B cell (primary cell): ENCODE measurements at regions of chr6 and their contacts with region 1.

Region 1: GRCh38 chr6:156686995-156687788 is 90.0 kb upstream of the ARID1B start:
- DNase-seq: peak; percentile 91
- ATAC-seq: peak; percentile 83
- H3K4me3 ChIP-seq: peak overlapping the region; percentile 80 to 99 (median 84)
- H3K4me3 Mint-ChIP-seq: peak overlapping the region; percentile 88
- H3K27ac ChIP-seq: peak overlapping the region; percentile 92 to 94
- H3K27ac Mint-ChIP-seq: peak overlapping the region; percentile 98
- H3K4me1 ChIP-seq: peaks cover 50% of the 10 kb centered on the region in 2 donors
- H3K4me1 Mint-ChIP-seq: peaks cover 59% of the 10 kb centered on the region
- H3K27me3 ChIP-seq: no peaks in the 10 kb centered on the region
- H3K27me3 Mint-ChIP-seq: no peaks in the 10 kb centered on the region
- CTCF ChIP-seq: no peak

Region 2: GRCh38 chr6:156028335-156029131 is 658.7 kb before region 1 on chr6:
- CTCF ChIA-PET with region 1: no interaction called
- POLR2A ChIA-PET with region 1: interaction called, 11 read pairs
- intact Hi-C with region 1: no loop called
- DNase-seq: peak; percentile 23
- ATAC-seq: peak; percentile 82
- H3K4me3 ChIP-seq: no peak overlapping the region
- H3K4me3 Mint-ChIP-seq: peak overlapping the region; percentile 50
- H3K27ac ChIP-seq: no peak overlapping the region
- H3K27ac Mint-ChIP-seq: peak overlapping the region; percentile 86
- H3K4me1 ChIP-seq: peaks cover 32 to 40% of the 10 kb centered on the region in 2 donors
- H3K4me1 Mint-ChIP-seq: peaks cover 46% of the 10 kb centered on the region
- H3K27me3 ChIP-seq: no peaks in the 10 kb centered on the region
- H3K27me3 Mint-ChIP-seq: no peaks in the 10 kb centered on the region
- CTCF ChIP-seq: no peak

Region 3: DNA sequence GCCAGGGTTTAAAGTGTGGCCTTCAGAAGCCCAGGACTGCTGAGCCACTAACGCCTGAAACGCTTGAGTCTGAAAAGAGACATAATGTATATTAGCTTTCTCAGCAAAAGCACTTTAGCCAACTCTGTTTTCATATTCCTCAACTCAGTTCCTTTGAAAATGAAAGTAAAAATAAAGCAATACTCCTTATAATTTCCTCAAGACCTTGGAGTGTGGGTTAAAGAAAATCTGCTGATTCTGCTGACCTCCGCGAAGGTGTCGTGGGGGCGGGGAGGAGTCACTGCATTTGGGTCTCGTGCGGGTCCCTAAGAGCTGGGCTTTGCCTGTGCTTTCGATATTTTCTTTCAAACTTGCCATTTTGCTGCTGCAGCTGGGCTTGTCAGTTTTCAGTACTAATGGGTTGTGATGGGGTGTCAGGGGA is 52.2 kb before region 1 on chr6:
- CTCF ChIA-PET with region 1: interaction called, 14 read pairs
- POLR2A ChIA-PET with region 1: no interaction called
- intact Hi-C with region 1: loop called (anchors 2 kb)
- DNase-seq: peak; percentile 17
- ATAC-seq: no peak
- H3K4me3 ChIP-seq: peak overlapping the region in 3 of 5 experiments; percentile 10 to 37 (median 35)
- H3K4me3 Mint-ChIP-seq: peak overlapping the region; percentile 84
- H3K27ac ChIP-seq: peak overlapping the region; percentile 77 to 85
- H3K27ac Mint-ChIP-seq: peak overlapping the region; percentile 94
- H3K4me1 ChIP-seq: peaks cover 44 to 48% of the 10 kb centered on the region in 2 donors
- H3K4me1 Mint-ChIP-seq: peaks cover 51% of the 10 kb centered on the region
- H3K27me3 ChIP-seq: no peaks in the 10 kb centered on the region
- H3K27me3 Mint-ChIP-seq: no peaks in the 10 kb centered on the region
- CTCF ChIP-seq: no peak

Region 4: DNA sequence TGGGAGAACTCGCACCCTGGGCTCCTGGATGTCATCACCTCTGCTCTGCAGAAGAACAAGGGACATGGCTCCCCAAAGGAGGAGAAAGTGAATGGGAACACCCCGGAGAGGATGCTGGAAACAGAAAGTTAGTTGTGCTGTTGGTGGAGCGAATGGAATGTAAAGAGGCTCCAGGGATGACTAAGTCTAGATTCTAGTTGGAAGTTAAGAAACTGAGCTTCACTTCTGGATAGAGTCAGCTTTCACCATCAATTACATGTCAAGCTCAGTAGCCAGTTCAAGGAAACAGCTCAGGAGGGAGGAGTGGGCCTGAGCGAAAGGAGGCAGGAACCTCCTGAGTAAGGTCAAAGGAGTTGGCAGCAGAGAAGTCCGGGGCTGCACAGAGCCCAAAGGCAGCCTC is 42.1 kb before region 1 on chr6:
- CTCF ChIA-PET with region 1: no interaction called
- POLR2A ChIA-PET with region 1: no interaction called
- intact Hi-C with region 1: no loop called
- DNase-seq: no peak
- ATAC-seq: no peak
- H3K4me3 ChIP-seq: no peak overlapping the region
- H3K4me3 Mint-ChIP-seq: no peak overlapping the region
- H3K27ac ChIP-seq: no peak overlapping the region
- H3K27ac Mint-ChIP-seq: no peak overlapping the region
- H3K4me1 ChIP-seq: peaks cover 21 to 26% of the 10 kb centered on the region in 2 donors
- H3K4me1 Mint-ChIP-seq: peaks cover 32% of the 10 kb centered on the region
- H3K27me3 ChIP-seq: no peaks in the 10 kb centered on the region
- H3K27me3 Mint-ChIP-seq: peaks cover 12% of the 10 kb centered on the region
- CTCF ChIP-seq: no peak

Region 5: DNA sequence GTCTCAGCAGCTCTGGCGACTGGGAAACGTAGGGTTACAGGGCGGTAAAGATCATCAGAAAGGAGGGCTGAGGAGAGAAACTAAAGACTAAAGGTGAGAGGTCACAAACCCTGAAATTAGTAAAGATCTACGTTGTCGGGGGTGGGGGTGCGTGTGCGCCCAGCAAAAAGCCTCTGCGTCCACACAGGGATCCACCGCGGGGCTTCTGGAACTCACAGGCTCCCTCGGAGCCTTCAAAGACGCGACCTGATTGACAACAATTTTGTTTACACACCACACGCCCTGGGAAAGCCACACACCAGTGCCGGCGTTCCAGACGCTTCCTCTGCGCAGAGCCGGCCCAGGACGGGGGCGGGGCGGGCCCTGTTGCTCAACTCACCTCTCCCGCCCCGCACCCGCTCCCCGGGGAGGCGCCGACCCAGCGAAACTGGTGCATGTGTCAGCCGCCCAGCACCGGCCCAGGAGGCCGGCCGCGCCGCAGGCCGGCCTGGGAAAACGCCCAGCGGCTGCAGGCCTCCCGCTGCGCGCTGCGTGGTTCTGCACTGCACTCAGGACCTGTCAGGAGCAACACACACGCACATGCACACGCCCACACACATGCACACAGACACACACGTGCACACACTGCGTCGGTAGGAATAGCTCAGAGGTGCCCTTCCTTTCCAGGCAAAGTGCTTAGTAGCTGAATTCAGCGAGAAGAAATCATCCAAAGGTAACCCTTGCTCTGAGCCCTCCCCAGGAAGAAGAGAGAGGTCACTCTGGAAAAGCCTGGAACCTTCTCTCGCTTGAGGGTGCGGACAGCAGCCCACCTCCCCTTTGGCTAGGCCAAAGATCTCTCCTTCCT is 32.8 kb after region 1 on chr6:
- CTCF ChIA-PET with region 1: interaction called, 9 read pairs
- POLR2A ChIA-PET with region 1: interaction called, 14 read pairs
- intact Hi-C with region 1: loop called (anchors 1 kb)
- DNase-seq: peak; percentile 81
- ATAC-seq: peak; percentile 84
- H3K4me3 ChIP-seq: peak overlapping the region; percentile 47 to 69 (median 55)
- H3K4me3 Mint-ChIP-seq: peak overlapping the region; percentile 92
- H3K27ac ChIP-seq: peak overlapping the region; percentile 83 to 90
- H3K27ac Mint-ChIP-seq: peak overlapping the region; percentile 97
- H3K4me1 ChIP-seq: peaks cover 18 to 32% of the 10 kb centered on the region in 2 donors
- H3K4me1 Mint-ChIP-seq: peaks cover 37% of the 10 kb centered on the region
- H3K27me3 ChIP-seq: no peaks in the 10 kb centered on the region
- H3K27me3 Mint-ChIP-seq: no peaks in the 10 kb centered on the region
- CTCF ChIP-seq: no peak

Region 6: DNA sequence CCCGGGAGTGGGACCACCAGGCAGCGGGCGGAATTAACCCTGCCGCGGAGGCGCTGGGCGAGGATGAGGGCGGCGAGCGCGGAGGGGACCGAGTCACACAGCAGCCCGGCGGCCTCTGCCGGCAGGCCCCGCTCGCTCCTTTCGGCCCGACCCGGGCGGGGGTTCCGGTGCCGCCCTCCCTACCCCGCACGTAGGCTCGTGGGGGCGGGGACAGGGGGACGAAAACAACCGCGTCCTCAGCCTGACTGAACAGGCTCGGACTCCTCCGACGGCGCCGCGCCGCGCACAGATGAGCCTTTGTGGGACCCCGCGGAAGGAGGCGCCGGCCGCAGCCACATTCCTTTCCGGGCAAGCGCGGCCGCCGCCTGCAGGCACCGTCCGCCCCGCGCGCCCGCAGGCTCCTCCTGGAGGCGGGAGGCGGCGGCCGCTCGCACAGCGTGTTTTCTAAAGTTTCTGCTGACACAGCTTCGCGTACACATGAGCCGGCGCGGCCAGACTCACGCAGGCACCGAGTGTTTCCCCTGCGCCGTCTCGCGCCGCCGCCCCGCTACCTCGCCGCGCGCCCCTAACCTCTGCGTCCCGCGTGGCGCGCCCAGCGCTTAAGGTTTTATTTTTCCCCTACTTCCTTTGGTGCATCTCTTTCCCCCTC is 334.3 kb after region 1 on chr6:
- CTCF ChIA-PET with region 1: interaction called, 4 read pairs
- POLR2A ChIA-PET with region 1: no interaction called
- intact Hi-C with region 1: loop called (anchors 1 kb)
- DNase-seq: peak; percentile 93
- ATAC-seq: peak; percentile 80
- H3K4me3 ChIP-seq: peak overlapping the region; percentile 84 to 97 (median 87)
- H3K4me3 Mint-ChIP-seq: peak overlapping the region; percentile 94
- H3K27ac ChIP-seq: peak overlapping the region; percentile 98 to 100
- H3K27ac Mint-ChIP-seq: peak overlapping the region; percentile 99
- H3K4me1 ChIP-seq: peaks cover 33 to 40% of the 10 kb centered on the region in 2 donors
- H3K4me1 Mint-ChIP-seq: peaks cover 63% of the 10 kb centered on the region
- H3K27me3 ChIP-seq: no peaks in the 10 kb centered on the region
- H3K27me3 Mint-ChIP-seq: no peaks in the 10 kb centered on the region
- CTCF ChIP-seq: peak; percentile 50